Activated CD8-positive, alpha-beta T cell treated with anti-CD3 and anti-CD28 coated beads, Interleukin-2, amount 10 ng/mL, durations not matched to agents 7 days and 5 days (primary cell): ENCODE measurements at regions of chr16 and their contacts with region 1.

Region 1: DNA sequence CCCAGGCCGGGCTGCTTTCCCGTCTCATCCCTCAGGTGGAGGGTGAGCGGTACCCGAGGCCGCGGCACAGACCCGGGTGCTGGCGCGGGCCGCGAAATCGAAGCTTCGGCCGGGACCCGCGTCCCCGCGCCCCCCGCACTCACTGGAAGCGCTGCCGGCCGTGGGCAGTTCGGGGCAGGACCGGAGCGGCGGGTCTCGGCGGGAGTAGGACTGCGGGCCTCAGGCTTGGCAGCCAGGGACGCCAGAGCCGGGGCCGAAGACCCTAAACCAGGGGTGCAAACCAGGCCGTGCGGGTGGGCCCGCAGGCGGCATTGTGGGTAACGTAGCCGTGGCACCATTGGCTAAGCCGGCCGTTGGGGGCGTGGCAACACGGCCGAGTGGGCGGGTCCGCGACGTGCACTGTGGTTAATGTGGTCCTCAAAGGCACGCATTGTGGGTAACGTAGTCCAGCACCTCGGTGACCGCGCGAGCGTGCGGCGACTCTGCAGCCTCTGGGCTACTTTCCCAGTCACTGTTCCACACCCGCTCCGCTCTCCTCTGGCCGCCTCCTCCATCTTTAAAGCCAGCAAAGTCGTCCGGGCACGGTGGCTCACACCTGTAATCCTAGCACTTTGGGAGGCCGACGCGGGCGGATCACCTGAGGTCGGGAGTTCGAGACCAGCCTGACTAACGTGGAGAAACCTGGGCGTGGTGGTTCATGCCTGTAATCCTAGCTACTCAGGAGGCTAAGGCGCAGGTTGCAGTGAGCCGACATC is at the start of gene ZNF500:
- DNase-seq: peak; percentile 96
- ATAC-seq: peak; percentile 79
- H3K4me3 Mint-ChIP-seq: peak within 1 kb of the TSS; percentile 92
- H3K27ac Mint-ChIP-seq: peak within 1 kb of the TSS; percentile 93
- H3K4me1 Mint-ChIP-seq: peaks cover 29% of the 10 kb centered on the region
- H3K27me3 Mint-ChIP-seq: no peaks in the 10 kb centered on the region
- total RNA-seq, gene ZNF500: 14.0 to 14.9 TPM

Region 2: DNA sequence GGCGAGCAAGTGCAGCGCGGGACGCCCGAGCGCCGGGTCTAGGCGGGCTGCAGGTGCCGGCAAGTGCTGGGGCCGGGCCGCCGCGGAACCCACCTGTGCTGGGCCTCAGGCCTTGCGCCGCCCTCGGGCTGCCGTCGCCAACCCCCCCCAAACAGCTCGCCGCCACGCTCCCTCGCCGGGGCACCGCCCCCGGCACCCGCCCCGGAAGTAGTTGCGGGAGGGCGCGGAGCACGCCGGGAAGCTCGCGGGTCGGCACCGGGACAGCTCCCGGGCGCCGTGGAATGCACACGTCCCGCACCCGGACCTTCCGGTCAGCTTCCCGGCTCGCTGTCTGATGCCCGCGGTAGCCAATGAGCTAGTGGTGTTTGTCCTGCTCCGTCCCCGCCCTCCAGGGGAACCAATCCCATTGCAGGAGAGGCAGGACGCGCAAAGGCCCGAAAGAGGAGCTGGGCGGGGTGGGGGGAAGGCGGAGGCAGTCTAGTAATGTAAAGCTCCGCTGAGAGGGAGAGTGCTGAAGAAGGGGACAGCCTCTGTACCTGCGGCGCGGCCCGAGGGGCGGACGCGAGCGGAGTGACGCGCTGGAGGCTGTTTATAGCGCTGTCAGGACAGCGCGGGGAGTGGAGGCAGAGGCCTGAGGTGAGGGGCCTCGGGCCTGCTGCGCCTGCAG is 32.9 kb before region 1 on chr16 and contains the starts of genes ANKS3 and DNAAF8:
- CTCF ChIA-PET with region 1: interaction called, 10 read pairs
- POLR2A ChIA-PET with region 1: interaction called, 16 read pairs
- DNase-seq: peak; percentile 86
- ATAC-seq: peak; percentile 82
- H3K4me3 Mint-ChIP-seq: peak within 1 kb of the TSS; percentile 85
- H3K27ac Mint-ChIP-seq: peak within 1 kb of the TSS; percentile 92
- H3K4me1 Mint-ChIP-seq: peaks cover 18% of the 10 kb centered on the region
- H3K27me3 Mint-ChIP-seq: no peaks in the 10 kb centered on the region
- total RNA-seq, gene ANKS3: 17.0 to 17.2 TPM
- total RNA-seq, gene DNAAF8: 0.39 to 0.68 TPM

Region 3: GRCh38 chr16:4802659-4803287 is 35.7 kb after region 1 on chr16:
- CTCF ChIA-PET with region 1: no interaction called
- POLR2A ChIA-PET with region 1: interaction called, 11 read pairs
- DNase-seq: peak; percentile 90
- ATAC-seq: peak; percentile 93
- H3K4me3 Mint-ChIP-seq: peak overlapping the region; percentile 83
- H3K27ac Mint-ChIP-seq: peak overlapping the region; percentile 78
- H3K4me1 Mint-ChIP-seq: peaks cover 26% of the 10 kb centered on the region
- H3K27me3 Mint-ChIP-seq: no peaks in the 10 kb centered on the region

Region 4: GRCh38 chr16:4813251-4814003 is 46.4 kb after region 1 on chr16:
- CTCF ChIA-PET with region 1: no interaction called
- POLR2A ChIA-PET with region 1: no interaction called
- DNase-seq: no peak
- ATAC-seq: no peak
- H3K4me3 Mint-ChIP-seq: no peak overlapping the region
- H3K27ac Mint-ChIP-seq: no peak overlapping the region
- H3K4me1 Mint-ChIP-seq: no peaks in the 10 kb centered on the region
- H3K27me3 Mint-ChIP-seq: no peaks in the 10 kb centered on the region

Region 5: GRCh38 chr16:4828567-4829321 is 61.7 kb after region 1 on chr16:
- CTCF ChIA-PET with region 1: no interaction called
- POLR2A ChIA-PET with region 1: no interaction called
- DNase-seq: no peak
- ATAC-seq: no peak
- H3K4me3 Mint-ChIP-seq: no peak overlapping the region
- H3K27ac Mint-ChIP-seq: no peak overlapping the region
- H3K4me1 Mint-ChIP-seq: peaks cover 6% of the 10 kb centered on the region
- H3K27me3 Mint-ChIP-seq: no peaks in the 10 kb centered on the region

Region 6: GRCh38 chr16:4882633-4883285 is 115.7 kb after region 1 on chr16:
- CTCF ChIA-PET with region 1: no interaction called
- POLR2A ChIA-PET with region 1: no interaction called
- DNase-seq: no peak
- ATAC-seq: no peak
- H3K4me3 Mint-ChIP-seq: no peak overlapping the region
- H3K27ac Mint-ChIP-seq: no peak overlapping the region
- H3K4me1 Mint-ChIP-seq: no peaks in the 10 kb centered on the region
- H3K27me3 Mint-ChIP-seq: no peaks in the 10 kb centered on the region